ENCODE measurements at regions of chr7 and their contacts with region 1.

Region 1: GRCh38 chr7:36487756-36488336 is 98.2 kb downstream of the ANLN start:
- DNase-seq: peak in 2 of 6 donors; percentile 15 to 48
- ATAC-seq: peak; percentile 86 to 95 (median 94)
- H3K4me3 ChIP-seq: no peak overlapping the region
- H3K27ac ChIP-seq: no peak overlapping the region
- H3K4me1 ChIP-seq: no peaks in the 10 kb centered on the region
- H3K27me3 ChIP-seq: no peaks in the 10 kb centered on the region
- CTCF ChIP-seq: peak in 3 of 4 donors; percentile 57 to 71 (median 58)

Region 2: GRCh38 chr7:36670585-36671431 is 183.0 kb after region 1 on chr7:
- intact Hi-C with region 1: loop called in 1 of 3 experiments (anchors 10 kb)
- DNase-seq: peak in 4 of 6 donors; percentile 33 to 67 (median 52)
- ATAC-seq: peak; percentile 76 to 100 (median 94)
- H3K4me3 ChIP-seq: no peak overlapping the region
- H3K27ac ChIP-seq: no peak overlapping the region
- H3K4me1 ChIP-seq: peaks cover 0 to 3% (median 0%) of the 10 kb centered on the region in 3 donors
- H3K27me3 ChIP-seq: no peaks in the 10 kb centered on the region
- CTCF ChIP-seq: peak; percentile 74 to 86 (median 84)

Region 3: GRCh38 chr7:37198906-37199485 is 711.1 kb after region 1 on chr7:
- intact Hi-C with region 1: loop called in 1 of 3 experiments (anchors 10 kb)
- DNase-seq: peak; percentile 72 to 90 (median 82)
- ATAC-seq: peak; percentile 85 to 92 (median 90)
- H3K4me3 ChIP-seq: no peak overlapping the region
- H3K27ac ChIP-seq: no peak overlapping the region
- H3K4me1 ChIP-seq: peaks cover 0 to 7% (median 5%) of the 10 kb centered on the region in 3 donors
- H3K27me3 ChIP-seq: no peaks in the 10 kb centered on the region
- CTCF ChIP-seq: peak; percentile 65 to 90 (median 84)